ENCODE measurements at regions of chr20 and their contacts with region 1.

Region 1: GRCh38 chr20:50070991-50071888 is 41.7 kb downstream of the UBE2V1 start:
- DNase-seq: peak; percentile 97
- ATAC-seq: peak; percentile 84
- H3K4me3 Mint-ChIP-seq: peak overlapping the region; percentile 57
- H3K27ac Mint-ChIP-seq: no peak overlapping the region
- H3K4me1 Mint-ChIP-seq: peaks cover 24% of the 10 kb centered on the region
- H3K27me3 Mint-ChIP-seq: no peaks in the 10 kb centered on the region
- CTCF ChIP-seq: peak; percentile 100

Region 2: DNA sequence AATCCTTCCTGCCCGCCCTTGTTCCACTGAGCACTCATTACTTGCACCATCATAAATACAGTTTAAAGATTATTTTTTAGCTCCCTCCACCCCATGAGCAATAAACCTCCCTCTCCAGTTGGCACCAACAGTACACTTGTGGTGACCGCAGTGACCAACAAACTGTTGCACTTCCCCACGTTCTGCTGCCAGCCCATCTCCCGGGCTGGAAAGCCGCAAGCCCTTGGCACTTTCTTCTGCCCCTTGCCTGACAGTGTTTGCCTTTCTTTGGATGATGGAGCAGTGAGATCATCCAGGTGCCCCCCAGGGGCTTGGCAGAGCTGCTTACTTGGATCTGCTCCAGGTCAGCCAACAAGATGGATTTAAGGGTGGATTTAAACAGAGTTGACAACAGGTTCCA is 610.3 kb before region 1 on chr20:
- CTCF ChIA-PET with region 1: no interaction called
- POLR2A ChIA-PET with region 1: no interaction called
- DNase-seq: no peak
- ATAC-seq: no peak
- H3K4me3 Mint-ChIP-seq: no peak overlapping the region
- H3K27ac Mint-ChIP-seq: no peak overlapping the region
- H3K4me1 Mint-ChIP-seq: no peaks in the 10 kb centered on the region
- H3K27me3 Mint-ChIP-seq: peaks cover 4% of the 10 kb centered on the region; the same call in 1 of the 2 replicates
- CTCF ChIP-seq: no peak

Region 3: DNA sequence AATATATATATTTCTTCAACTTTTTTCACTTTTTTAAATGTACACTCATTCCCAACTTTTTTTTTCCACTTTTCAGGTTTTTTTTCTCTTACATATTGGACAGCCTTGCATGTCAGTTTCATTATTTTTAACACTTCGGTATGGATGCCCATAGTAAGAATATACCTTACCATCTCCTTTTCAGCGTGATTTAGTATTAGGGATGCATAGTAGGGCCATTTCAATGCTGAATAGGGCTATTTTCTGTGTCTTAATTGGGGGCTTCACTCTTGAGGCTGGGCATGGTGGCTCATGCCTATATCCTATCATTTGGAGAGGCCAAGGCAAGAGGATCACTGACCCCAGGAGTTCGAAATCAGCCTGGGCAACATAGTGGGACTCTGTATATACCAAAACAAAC is 128.3 kb before region 1 on chr20:
- CTCF ChIA-PET with region 1: interaction called, 16 read pairs
- POLR2A ChIA-PET with region 1: no interaction called
- DNase-seq: no peak
- ATAC-seq: no peak
- H3K4me3 Mint-ChIP-seq: no peak overlapping the region
- H3K27ac Mint-ChIP-seq: no peak overlapping the region
- H3K4me1 Mint-ChIP-seq: peaks cover 21% of the 10 kb centered on the region
- H3K27me3 Mint-ChIP-seq: no peaks in the 10 kb centered on the region
- CTCF ChIP-seq: no peak

Region 4: GRCh38 chr20:49989234-49990065 is 81.8 kb before region 1 on chr20:
- CTCF ChIA-PET with region 1: interaction called, 288 read pairs
- POLR2A ChIA-PET with region 1: interaction called, 6 read pairs
- DNase-seq: peak; percentile 33
- ATAC-seq: peak; percentile 47
- H3K4me3 Mint-ChIP-seq: no peak overlapping the region; the same call in 1 of the 2 replicates
- H3K27ac Mint-ChIP-seq: peak overlapping the region; percentile 89
- H3K4me1 Mint-ChIP-seq: peaks cover 74% of the 10 kb centered on the region
- H3K27me3 Mint-ChIP-seq: no peaks in the 10 kb centered on the region; the same call in 1 of the 2 replicates
- CTCF ChIP-seq: no peak

Region 5: GRCh38 chr20:50048420-50049166 is 22.6 kb before region 1 on chr20:
- CTCF ChIA-PET with region 1: interaction called, 14 read pairs
- POLR2A ChIA-PET with region 1: interaction called, 10 read pairs
- DNase-seq: no peak
- ATAC-seq: no peak
- H3K4me3 Mint-ChIP-seq: no peak overlapping the region
- H3K27ac Mint-ChIP-seq: no peak overlapping the region
- H3K4me1 Mint-ChIP-seq: peaks cover 7% of the 10 kb centered on the region
- H3K27me3 Mint-ChIP-seq: no peaks in the 10 kb centered on the region
- CTCF ChIP-seq: no peak

Region 6: DNA sequence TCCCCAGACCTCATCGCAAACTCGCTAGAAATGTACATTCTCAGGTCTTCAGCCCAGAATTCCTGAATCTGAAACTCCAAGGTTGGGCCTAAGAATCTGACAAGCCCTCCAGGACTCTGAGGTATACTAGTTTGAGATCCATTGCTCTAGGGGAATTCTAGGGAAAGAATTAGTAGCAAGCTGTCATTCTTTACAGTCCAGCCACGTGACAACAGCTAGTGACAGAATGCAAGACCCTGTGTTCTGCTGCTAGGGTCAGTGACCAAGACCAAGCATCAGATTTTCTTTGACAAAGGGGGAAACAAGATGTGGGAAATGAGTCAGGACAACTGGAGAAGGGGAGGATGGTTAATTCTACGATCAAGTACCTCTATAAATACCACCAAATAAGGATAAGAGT is 36.0 kb after region 1 on chr20:
- CTCF ChIA-PET with region 1: interaction called, 11 read pairs
- POLR2A ChIA-PET with region 1: no interaction called
- DNase-seq: no peak
- ATAC-seq: no peak
- H3K4me3 Mint-ChIP-seq: no peak overlapping the region
- H3K27ac Mint-ChIP-seq: peak overlapping the region; percentile 58; the same call in 1 of the 2 replicates
- H3K4me1 Mint-ChIP-seq: peaks cover 66% of the 10 kb centered on the region
- H3K27me3 Mint-ChIP-seq: no peaks in the 10 kb centered on the region
- CTCF ChIP-seq: no peak

Region 7: DNA sequence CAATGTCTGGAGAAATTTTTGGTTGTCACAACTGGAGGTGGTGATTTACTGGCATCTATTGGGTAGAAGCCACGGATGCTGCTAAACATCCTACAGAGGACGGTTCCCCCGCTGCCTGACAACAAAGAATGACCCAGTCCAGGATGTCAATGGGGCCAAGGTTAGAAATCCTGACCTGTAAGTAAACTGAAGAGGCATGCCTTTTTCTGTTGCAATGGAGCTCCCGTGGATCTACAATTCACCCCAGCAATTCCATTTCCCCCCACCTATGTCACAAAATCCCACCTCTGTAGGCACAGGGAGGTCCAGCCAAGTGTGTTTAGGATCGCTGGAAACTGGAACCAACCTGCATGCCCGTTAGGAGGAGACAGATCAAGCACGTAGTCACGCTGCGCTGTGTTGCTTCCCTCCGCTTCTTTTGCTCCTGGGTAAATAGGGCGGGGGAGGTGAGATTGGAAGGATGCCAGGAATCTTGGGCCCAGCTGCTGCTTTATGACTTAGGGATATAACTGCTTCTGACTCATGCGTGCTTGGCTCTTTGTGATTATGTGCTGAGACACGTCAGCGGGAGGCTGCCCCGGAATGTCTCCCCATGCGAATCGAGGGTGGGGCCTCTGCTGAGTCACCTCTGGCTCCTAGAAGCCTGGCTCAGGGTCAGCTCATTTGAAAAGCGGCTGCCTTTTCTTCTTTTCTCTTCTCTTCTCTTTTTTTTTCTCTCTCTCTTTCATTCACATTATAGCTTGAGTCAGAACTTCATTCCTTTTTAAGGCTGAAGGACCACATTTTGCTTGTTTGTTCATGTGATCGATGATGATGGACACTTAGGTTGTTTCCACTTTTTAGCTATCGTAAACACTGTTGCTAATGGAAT is 94.7 kb after region 1 on chr20:
- CTCF ChIA-PET with region 1: interaction called, 11 read pairs
- POLR2A ChIA-PET with region 1: no interaction called
- DNase-seq: peak; percentile 82
- ATAC-seq: peak; percentile 81
- H3K4me3 Mint-ChIP-seq: peak overlapping the region; percentile 65
- H3K27ac Mint-ChIP-seq: peak overlapping the region; percentile 80
- H3K4me1 Mint-ChIP-seq: peaks cover 25% of the 10 kb centered on the region
- H3K27me3 Mint-ChIP-seq: no peaks in the 10 kb centered on the region; the same call in 1 of the 2 replicates
- CTCF ChIP-seq: no peak

Region 8: DNA sequence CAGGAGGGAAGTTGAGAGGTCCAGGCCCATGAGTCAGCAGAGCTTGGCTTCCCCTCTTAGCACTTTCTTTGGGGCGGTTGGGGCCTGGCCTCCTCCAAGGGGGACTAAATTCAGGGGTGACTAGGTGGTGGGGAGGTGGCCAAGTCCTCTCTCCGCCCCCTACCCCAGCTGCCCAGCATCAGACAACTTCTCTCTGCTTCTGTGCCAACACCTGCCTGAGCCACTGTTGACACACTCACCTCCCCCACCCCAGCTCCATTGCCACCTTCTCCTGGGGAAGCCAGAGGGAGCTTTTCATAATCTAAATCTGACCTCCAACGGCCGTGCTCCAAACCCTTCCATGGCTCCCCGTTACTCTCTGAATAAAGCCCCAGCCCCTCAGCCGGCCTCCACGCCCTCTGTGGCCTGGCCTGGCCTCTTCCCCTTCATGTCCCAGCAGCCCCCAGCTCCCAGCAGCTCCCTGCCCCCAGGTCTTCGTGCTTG is 189.5 kb after region 1 on chr20:
- CTCF ChIA-PET with region 1: no interaction called
- POLR2A ChIA-PET with region 1: no interaction called
- DNase-seq: no peak
- ATAC-seq: no peak
- H3K4me3 Mint-ChIP-seq: no peak overlapping the region
- H3K27ac Mint-ChIP-seq: peak overlapping the region; percentile 41; the same call in 1 of the 2 replicates
- H3K4me1 Mint-ChIP-seq: peaks cover 26% of the 10 kb centered on the region
- H3K27me3 Mint-ChIP-seq: no peaks in the 10 kb centered on the region
- CTCF ChIP-seq: no peak